ENCODE measurements at regions of chr17 and their contacts with region 1.

Region 1: GRCh38 chr17:28661635-28662537 is at the starts of genes SDF2 and SUPT6H:
- DNase-seq: peak; percentile 94
- ATAC-seq: peak; percentile 86
- H3K4me3 Mint-ChIP-seq: peak within 1 kb of the TSS; percentile 99
- H3K27ac Mint-ChIP-seq: peak within 1 kb of the TSS; percentile 96
- H3K4me1 Mint-ChIP-seq: peaks cover 30% of the 10 kb centered on the region
- H3K27me3 Mint-ChIP-seq: no peaks in the 10 kb centered on the region
- total RNA-seq, gene SDF2: 47.3 to 50.1 TPM
- total RNA-seq, gene SUPT6H: 81.4 to 87.1 TPM

Region 2: DNA sequence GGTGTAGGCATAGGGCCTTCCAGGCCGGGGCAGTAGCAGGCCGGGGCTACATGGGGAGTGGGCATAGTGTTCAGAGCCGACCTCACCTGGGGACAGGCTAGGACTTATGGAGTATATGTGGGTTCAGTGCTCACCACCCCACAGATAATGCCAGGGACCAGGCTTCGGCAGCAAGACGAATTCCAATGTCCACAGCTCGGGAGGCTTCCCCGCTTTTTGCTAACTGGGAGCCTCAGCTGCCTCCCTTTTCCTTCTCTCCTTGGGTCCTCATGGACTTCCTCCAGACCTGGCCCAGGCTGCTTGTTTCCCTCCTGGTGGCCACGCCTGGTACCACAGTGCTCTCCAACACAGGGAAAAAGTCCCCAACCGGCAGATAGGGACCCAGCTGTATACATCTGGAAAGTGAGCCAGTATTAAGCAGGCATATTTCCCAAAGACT is 235.8 kb before region 1 on chr17:
- POLR2A ChIA-PET with region 1: no interaction called
- DNase-seq: no peak
- ATAC-seq: no peak
- H3K4me3 Mint-ChIP-seq: no peak overlapping the region
- H3K27ac Mint-ChIP-seq: no peak overlapping the region
- H3K4me1 Mint-ChIP-seq: no peaks in the 10 kb centered on the region
- H3K27me3 Mint-ChIP-seq: peaks cover 15% of the 10 kb centered on the region

Region 3: GRCh38 chr17:28710861-28711722 is 49.2 kb after region 1 on chr17:
- POLR2A ChIA-PET with region 1: interaction called, 21 read pairs
- DNase-seq: peak; percentile 96
- ATAC-seq: peak; percentile 84
- H3K4me3 Mint-ChIP-seq: peak overlapping the region; percentile 95
- H3K27ac Mint-ChIP-seq: peak overlapping the region; percentile 99
- H3K4me1 Mint-ChIP-seq: peaks cover 21% of the 10 kb centered on the region
- H3K27me3 Mint-ChIP-seq: peaks cover 17% of the 10 kb centered on the region

Region 4: GRCh38 chr17:28720247-28720996 is 58.5 kb after region 1 on chr17:
- POLR2A ChIA-PET with region 1: interaction called, 20 read pairs
- DNase-seq: no peak
- ATAC-seq: no peak
- H3K4me3 Mint-ChIP-seq: peak overlapping the region; percentile 95
- H3K27ac Mint-ChIP-seq: peak overlapping the region; percentile 97
- H3K4me1 Mint-ChIP-seq: peaks cover 43% of the 10 kb centered on the region
- H3K27me3 Mint-ChIP-seq: peaks cover 19% of the 10 kb centered on the region